Mammary epithelial cell (primary cell): ENCODE measurements at regions of chr2 and their contacts with region 1.

Region 1: DNA sequence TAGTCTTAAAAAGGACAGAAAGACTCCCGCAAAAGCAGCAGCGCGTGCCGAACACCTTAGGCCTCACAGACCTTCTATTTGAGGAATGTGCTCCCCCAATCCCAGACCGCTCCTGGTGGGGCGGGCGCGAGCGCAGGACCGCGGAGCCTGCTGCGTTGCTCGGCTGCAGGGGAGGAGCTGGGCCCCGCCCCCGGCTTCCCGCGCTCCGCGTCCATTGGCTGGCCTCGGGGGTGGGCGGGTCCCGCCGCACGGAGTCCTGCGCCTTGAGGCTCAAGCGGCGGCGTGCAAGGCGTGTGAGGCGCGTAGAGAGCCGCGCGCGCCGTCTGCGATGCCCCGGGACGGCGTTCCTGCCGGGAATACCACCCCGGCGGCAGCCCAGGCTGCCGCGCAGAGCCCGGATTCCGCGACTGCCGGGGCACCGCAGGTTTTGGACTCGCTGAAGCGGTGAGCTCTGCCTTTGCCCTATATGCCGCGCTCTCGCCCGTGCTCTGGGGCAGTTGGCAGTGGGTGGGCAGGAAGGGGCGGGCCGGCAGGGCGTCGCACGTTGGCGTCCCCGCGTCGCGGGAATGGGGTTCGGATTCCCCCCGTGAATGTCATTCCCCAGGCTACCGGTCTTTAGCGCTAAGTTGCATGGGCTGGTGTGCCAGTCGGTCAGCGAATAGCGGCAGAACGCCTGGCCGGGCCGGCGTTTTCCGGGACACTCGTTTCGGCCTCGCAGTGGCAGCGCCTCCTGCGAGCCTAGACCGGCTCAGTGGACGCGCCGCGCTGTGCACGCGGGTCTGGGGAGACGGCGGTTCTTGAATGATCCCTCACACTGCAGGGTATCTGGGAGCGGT is 49.6 kb upstream of the PAIP2B start:
- DNase-seq: peak; percentile 91
- H3K4me3 ChIP-seq: peak overlapping the region; percentile 60 to 85 (median 85)
- H3K27ac ChIP-seq: peak overlapping the region; percentile 51
- H3K4me1 ChIP-seq: peaks cover 13% of the 10 kb centered on the region
- H3K27me3 ChIP-seq: no peaks in the 10 kb centered on the region
- CTCF ChIP-seq: no peak

Region 2: GRCh38 chr2:71226965-71227560 is 49.5 kb before region 1 on chr2 and contains the start of gene PAIP2B:
- CTCF ChIA-PET with region 1: no interaction called
- dilution Hi-C with region 1: no loop called
- in situ Hi-C with region 1: no loop called
- intact Hi-C with region 1: loop called (anchors 1 kb)
- DNase-seq: peak; percentile 100
- H3K4me3 ChIP-seq: peak within 1 kb of the TSS; percentile 83 to 92 (median 84)
- H3K27ac ChIP-seq: peak within 1 kb of the TSS; percentile 19
- H3K4me1 ChIP-seq: peaks cover 9% of the 10 kb centered on the region
- H3K27me3 ChIP-seq: peaks cover 3% of the 10 kb centered on the region
- CTCF ChIP-seq: no peak
- total RNA-seq, gene PAIP2B: 2.0 to 2.1 TPM

Region 3: DNA sequence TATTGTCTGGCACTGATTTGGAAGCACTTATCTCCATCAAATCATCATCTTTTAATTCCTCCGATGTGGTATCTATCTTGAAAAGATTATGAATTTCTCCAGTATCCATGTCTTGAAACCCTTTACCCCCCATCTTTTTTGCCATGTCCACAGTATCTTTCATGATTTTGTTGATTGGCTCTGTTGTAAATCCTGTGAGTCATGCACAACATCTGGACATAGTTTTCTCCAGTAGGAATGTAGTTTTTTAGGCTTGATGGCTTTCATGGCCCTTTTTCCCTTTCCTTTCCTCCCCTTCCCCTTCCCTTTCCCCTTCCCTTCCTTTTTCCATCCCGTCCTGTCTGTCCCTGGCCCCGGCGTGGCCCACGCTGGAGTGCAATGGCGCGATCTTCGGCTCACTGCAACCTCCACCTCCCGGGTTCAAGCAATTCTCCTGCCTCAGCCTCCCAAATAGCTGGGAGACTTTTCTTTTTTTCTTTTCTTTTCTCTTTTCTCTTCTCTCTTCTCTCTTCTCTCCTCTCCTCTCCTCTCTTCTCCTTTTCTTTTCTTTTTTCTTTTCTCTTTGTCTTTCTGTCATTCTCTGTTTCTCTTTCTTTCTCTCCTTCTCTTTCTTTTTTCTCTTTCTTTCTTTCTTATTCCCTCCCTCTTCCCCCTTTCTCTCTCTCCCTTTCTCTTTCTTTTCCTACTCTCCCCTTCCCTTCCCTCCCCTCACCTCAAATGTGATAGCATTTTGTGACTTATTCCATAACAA is 36.7 kb after region 1 on chr2:
- CTCF ChIA-PET with region 1: no interaction called
- dilution Hi-C with region 1: no loop called
- in situ Hi-C with region 1: no loop called
- intact Hi-C with region 1: no loop called
- DNase-seq: no peak
- H3K4me3 ChIP-seq: no peak overlapping the region
- H3K27ac ChIP-seq: no peak overlapping the region
- H3K4me1 ChIP-seq: no peaks in the 10 kb centered on the region
- H3K27me3 ChIP-seq: no peaks in the 10 kb centered on the region
- CTCF ChIP-seq: no peak

Region 4: DNA sequence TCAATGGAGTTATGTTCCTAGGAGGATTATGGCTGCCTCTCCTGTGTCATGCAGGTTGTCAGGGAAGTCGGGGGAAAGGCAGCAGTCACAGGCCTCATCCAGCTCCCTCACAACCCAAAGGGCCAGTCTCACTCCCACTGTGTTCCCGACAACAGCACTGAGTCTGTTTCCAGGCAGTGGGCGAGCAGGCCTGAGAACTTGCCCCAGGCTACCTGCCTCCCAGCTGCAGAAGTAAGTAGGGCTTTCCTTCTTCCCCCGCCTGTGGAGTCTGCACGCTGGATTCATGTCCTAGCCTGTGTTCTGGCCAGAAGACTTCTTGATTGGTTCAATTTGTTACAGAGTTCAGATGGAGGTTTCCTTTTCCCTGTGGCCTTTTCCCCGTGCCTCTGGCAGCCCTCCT is 46.9 kb after region 1 on chr2:
- CTCF ChIA-PET with region 1: no interaction called
- dilution Hi-C with region 1: loop called (anchors 5 kb)
- in situ Hi-C with region 1: no loop called
- intact Hi-C with region 1: no loop called
- DNase-seq: peak; percentile 68
- H3K4me3 ChIP-seq: no peak overlapping the region
- H3K27ac ChIP-seq: no peak overlapping the region
- H3K4me1 ChIP-seq: peaks cover 8% of the 10 kb centered on the region
- H3K27me3 ChIP-seq: no peaks in the 10 kb centered on the region
- CTCF ChIP-seq: no peak

Region 5: GRCh38 chr2:71460595-71461303 is 184.2 kb after region 1 on chr2:
- CTCF ChIA-PET with region 1: interaction called, 10 read pairs
- dilution Hi-C with region 1: no loop called
- in situ Hi-C with region 1: no loop called
- intact Hi-C with region 1: no loop called
- DNase-seq: no peak
- H3K4me3 ChIP-seq: no peak overlapping the region
- H3K27ac ChIP-seq: no peak overlapping the region
- H3K4me1 ChIP-seq: peaks cover 26% of the 10 kb centered on the region
- H3K27me3 ChIP-seq: no peaks in the 10 kb centered on the region
- CTCF ChIP-seq: peak; percentile 48 to 62